CD4-positive, alpha-beta T cell (primary cell): ENCODE measurements at regions of chr7 and their contacts with region 1.

Region 1: DNA sequence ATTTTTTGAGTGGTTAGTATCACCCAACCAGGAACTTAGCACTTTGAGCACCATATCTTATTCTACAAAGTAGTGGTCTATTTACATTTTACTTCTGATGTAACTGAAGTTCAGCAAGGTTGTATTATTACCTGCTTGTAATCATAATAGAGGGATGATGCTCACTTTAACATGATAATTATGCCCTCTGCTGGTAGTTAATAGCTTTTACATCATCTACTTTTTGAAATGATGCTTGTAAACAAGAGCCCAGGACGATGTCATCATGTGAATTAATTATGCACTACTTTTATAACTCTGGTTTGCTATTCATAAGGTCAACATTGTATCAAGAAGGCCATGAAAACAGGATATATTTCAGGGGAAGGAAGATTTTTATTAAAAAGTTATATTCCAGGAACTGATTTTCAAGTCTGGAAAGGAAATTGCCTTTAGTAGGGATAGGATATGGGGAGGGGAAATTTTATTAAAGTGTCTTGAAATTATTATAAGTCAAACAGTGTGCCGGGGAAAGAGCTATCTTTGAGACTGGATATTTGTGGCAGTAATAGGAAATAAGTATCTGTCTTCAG is 80.3 kb upstream of the SCIN start:
- DNase-seq: peak in 3 of 14 experiments; percentile 39 to 43 (median 43)
- ATAC-seq: peak; percentile 49
- H3K4me3 ChIP-seq: no peak overlapping the region
- H3K4me3 Mint-ChIP-seq: no peak overlapping the region
- H3K27ac ChIP-seq: no peak overlapping the region
- H3K27ac Mint-ChIP-seq: no peak overlapping the region
- H3K4me1 ChIP-seq: no peaks in the 10 kb centered on the region
- H3K4me1 Mint-ChIP-seq: no peaks in the 10 kb centered on the region
- H3K27me3 ChIP-seq: no peaks in the 10 kb centered on the region
- H3K27me3 Mint-ChIP-seq: peaks cover 4% of the 10 kb centered on the region
- CTCF ChIP-seq: peak; percentile 59

Region 2: DNA sequence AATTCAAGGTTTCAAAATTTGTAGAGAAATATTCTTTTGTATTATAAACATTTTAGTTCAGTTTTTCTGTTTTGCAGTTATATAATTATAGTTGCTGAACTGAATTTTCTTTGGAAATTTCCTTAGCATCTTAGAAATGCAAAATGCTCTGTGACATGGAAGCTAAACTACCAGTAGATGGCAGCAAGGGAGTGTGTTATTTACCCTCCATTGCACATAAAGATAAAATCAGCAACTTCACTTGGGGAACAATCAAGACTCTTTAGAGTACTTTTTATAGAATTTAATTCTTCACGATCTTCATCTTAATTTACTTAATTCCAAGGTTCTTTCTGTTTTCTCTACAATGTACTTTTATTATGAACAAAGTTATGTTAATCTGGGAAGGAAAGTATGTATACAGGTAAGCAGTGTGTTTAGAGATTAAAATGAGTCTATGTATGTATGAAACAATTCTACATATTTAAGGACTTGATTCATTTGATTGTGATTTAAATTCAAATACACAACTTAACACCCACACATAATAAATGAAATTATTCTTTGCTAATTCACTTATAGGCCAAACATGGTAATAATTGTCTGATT is 1062.4 kb before region 1 on chr7:
- CTCF ChIA-PET with region 1: no interaction called
- POLR2A ChIA-PET with region 1: no interaction called
- intact Hi-C with region 1: loop called (anchors 5 to 10 kb)
- DNase-seq: peak in 3 of 14 experiments; percentile 13 to 45 (median 34)
- ATAC-seq: no peak
- H3K4me3 ChIP-seq: no peak overlapping the region
- H3K4me3 Mint-ChIP-seq: no peak overlapping the region
- H3K27ac ChIP-seq: no peak overlapping the region
- H3K27ac Mint-ChIP-seq: no peak overlapping the region
- H3K4me1 ChIP-seq: no peaks in the 10 kb centered on the region
- H3K4me1 Mint-ChIP-seq: no peaks in the 10 kb centered on the region
- H3K27me3 ChIP-seq: no peaks in the 10 kb centered on the region
- H3K27me3 Mint-ChIP-seq: no peaks in the 10 kb centered on the region
- CTCF ChIP-seq: no peak

Region 3: DNA sequence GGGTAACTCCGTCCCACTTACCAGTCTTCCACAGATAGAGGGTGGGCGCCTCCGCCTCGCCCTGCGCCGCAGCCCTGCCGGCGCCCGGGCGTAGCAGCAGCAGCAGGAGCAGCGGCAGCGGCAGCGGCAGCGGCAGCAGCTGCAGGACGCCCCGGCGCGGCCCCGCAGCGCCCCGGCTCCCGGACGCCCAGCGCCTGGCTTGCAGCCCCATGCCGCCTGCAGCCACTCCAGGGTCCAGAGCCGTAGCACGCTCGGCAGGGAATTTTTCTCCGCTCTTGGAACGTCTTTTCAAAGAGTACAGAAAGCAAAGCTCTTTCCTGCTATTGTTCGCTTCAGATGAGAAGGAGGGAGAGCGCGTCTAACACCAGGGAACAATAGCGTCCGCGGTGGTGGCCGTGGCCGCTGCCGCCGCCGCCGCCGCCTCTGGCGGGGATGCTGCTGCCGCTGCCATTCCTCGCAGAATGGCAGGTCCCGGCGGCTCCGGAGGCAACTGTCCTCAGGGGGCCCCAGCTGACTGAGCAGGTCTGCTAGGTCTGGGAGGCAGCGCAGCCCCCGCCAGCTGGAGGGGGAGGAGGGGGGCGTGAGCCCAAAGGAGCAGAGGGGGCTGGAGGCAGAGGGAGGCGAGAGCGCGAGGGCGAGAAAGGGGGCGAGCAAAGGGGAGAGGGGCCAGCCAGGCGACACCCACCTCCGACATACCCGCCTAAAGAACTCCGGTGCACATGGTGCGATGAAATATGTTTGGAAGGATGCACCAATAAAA is 658.3 kb before region 1 on chr7 and contains the start of gene THSD7A:
- CTCF ChIA-PET with region 1: no interaction called
- POLR2A ChIA-PET with region 1: no interaction called
- intact Hi-C with region 1: loop called in 1 of 2 experiments (anchors 10 kb)
- DNase-seq: peak in 2 of 14 experiments; percentile 2 to 15
- ATAC-seq: no peak
- H3K4me3 ChIP-seq: no peak within 1 kb of the TSS
- H3K4me3 Mint-ChIP-seq: peak within 1 kb of the TSS; percentile 1
- H3K27ac ChIP-seq: no peak within 1 kb of the TSS
- H3K27ac Mint-ChIP-seq: no peak within 1 kb of the TSS
- H3K4me1 ChIP-seq: peaks cover 2% of the 10 kb centered on the region
- H3K4me1 Mint-ChIP-seq: peaks cover 10% of the 10 kb centered on the region
- H3K27me3 ChIP-seq: peaks cover 6 to 29% of the 10 kb centered on the region in 2 experiments
- H3K27me3 Mint-ChIP-seq: peaks cover 48% of the 10 kb centered on the region
- CTCF ChIP-seq: no peak
- total RNA-seq, gene THSD7A: not detected

Region 4: DNA sequence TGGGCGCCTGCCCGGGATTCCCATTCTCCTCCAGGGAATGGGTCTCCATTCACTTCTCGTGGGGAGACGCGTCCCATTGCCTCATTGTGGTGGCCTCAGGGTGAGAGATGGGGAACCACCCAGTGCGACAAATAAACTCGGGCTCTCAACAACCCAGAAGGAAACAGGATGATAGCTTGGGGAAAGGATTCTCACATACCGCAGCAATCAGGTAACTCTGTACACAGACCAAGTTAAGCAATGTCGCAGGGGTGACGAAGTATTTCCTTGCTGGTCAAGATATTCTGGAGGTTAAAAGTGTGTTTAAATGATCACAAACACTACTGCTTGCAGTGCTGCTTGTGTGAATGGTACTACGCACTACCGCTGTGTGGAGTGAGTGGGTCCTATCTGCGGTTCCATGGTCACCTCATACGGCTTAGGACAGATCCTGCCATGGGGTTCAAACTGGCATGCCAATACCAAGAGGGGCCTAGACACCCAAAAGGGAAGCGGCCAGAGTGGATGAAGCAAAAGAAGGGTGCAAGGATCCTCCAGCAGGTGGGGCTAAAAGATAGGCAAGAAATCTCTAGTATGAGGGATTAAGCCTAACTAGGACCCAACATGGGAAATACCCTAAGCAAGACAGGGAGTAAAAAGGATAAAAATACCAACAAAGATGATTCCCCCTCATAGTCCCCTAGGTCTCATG is 422.9 kb before region 1 on chr7:
- CTCF ChIA-PET with region 1: interaction called, 3 read pairs
- POLR2A ChIA-PET with region 1: no interaction called
- intact Hi-C with region 1: loop called (anchors 1 to 2 kb)
- DNase-seq: peak; percentile 23 to 79 (median 46)
- ATAC-seq: peak; percentile 64
- H3K4me3 ChIP-seq: no peak overlapping the region
- H3K4me3 Mint-ChIP-seq: no peak overlapping the region
- H3K27ac ChIP-seq: no peak overlapping the region
- H3K27ac Mint-ChIP-seq: no peak overlapping the region
- H3K4me1 ChIP-seq: no peaks in the 10 kb centered on the region
- H3K4me1 Mint-ChIP-seq: no peaks in the 10 kb centered on the region
- H3K27me3 ChIP-seq: no peaks in the 10 kb centered on the region
- H3K27me3 Mint-ChIP-seq: no peaks in the 10 kb centered on the region
- CTCF ChIP-seq: peak; percentile 79

Region 5: DNA sequence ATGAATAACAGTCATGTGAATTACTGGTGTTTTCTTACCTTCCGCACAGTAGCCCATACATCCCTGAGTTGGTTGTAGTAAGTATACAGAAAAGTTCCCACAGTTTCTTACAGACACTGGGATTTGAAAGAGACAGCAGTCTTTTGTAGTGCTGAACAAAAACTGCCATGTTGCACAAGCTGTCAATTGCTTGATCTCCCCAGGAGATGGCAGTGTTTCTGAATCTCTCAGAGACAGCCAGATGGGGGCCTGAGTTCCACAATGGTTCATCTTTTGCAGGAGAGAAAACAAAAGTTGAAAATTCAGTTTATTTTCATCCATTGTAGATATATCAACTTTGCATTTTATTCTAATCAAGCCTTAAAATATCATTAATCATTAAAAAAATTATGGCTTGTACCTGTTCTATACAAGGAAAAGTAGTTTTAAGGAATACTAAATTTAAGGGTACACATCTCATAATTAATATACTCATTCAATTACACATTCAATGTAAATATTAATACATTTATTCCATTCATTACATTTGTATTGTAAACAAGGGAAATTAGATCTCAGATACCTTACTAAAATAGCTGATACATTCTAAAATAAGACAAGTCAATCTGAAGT is 101.0 kb before region 1 on chr7:
- CTCF ChIA-PET with region 1: interaction called, 3 read pairs
- POLR2A ChIA-PET with region 1: no interaction called
- intact Hi-C with region 1: loop called (anchors 1 to 2 kb)
- DNase-seq: peak in 9 of 14 experiments; percentile 7 to 69 (median 11)
- ATAC-seq: peak; percentile 84
- H3K4me3 ChIP-seq: no peak overlapping the region
- H3K4me3 Mint-ChIP-seq: no peak overlapping the region
- H3K27ac ChIP-seq: no peak overlapping the region
- H3K27ac Mint-ChIP-seq: no peak overlapping the region
- H3K4me1 ChIP-seq: no peaks in the 10 kb centered on the region
- H3K4me1 Mint-ChIP-seq: no peaks in the 10 kb centered on the region
- H3K27me3 ChIP-seq: no peaks in the 10 kb centered on the region
- H3K27me3 Mint-ChIP-seq: no peaks in the 10 kb centered on the region
- CTCF ChIP-seq: peak; percentile 74

Region 6: GRCh38 chr7:12458520-12459131 is 31.6 kb before region 1 on chr7:
- CTCF ChIA-PET with region 1: interaction called, 6 read pairs
- POLR2A ChIA-PET with region 1: interaction called, 5 read pairs
- intact Hi-C with region 1: loop called (anchors 1 to 5 kb)
- DNase-seq: peak in 3 of 14 experiments; percentile 45 to 46 (median 45)
- ATAC-seq: peak; percentile 67
- H3K4me3 ChIP-seq: no peak overlapping the region
- H3K4me3 Mint-ChIP-seq: no peak overlapping the region
- H3K27ac ChIP-seq: no peak overlapping the region
- H3K27ac Mint-ChIP-seq: no peak overlapping the region
- H3K4me1 ChIP-seq: no peaks in the 10 kb centered on the region
- H3K4me1 Mint-ChIP-seq: no peaks in the 10 kb centered on the region
- H3K27me3 ChIP-seq: no peaks in the 10 kb centered on the region
- H3K27me3 Mint-ChIP-seq: peaks cover 20% of the 10 kb centered on the region
- CTCF ChIP-seq: peak; percentile 62

Region 7: GRCh38 chr7:12741951-12742575 is 251.9 kb after region 1 on chr7:
- CTCF ChIA-PET with region 1: no interaction called
- POLR2A ChIA-PET with region 1: no interaction called
- intact Hi-C with region 1: no loop called
- DNase-seq: no peak
- ATAC-seq: no peak
- H3K4me3 ChIP-seq: no peak overlapping the region
- H3K4me3 Mint-ChIP-seq: no peak overlapping the region
- H3K27ac ChIP-seq: no peak overlapping the region
- H3K27ac Mint-ChIP-seq: no peak overlapping the region
- H3K4me1 ChIP-seq: no peaks in the 10 kb centered on the region
- H3K4me1 Mint-ChIP-seq: no peaks in the 10 kb centered on the region
- H3K27me3 ChIP-seq: no peaks in the 10 kb centered on the region
- H3K27me3 Mint-ChIP-seq: no peaks in the 10 kb centered on the region
- CTCF ChIP-seq: no peak